ENCODE measurements at regions of chr9 and their contacts with region 1.

Region 1: DNA sequence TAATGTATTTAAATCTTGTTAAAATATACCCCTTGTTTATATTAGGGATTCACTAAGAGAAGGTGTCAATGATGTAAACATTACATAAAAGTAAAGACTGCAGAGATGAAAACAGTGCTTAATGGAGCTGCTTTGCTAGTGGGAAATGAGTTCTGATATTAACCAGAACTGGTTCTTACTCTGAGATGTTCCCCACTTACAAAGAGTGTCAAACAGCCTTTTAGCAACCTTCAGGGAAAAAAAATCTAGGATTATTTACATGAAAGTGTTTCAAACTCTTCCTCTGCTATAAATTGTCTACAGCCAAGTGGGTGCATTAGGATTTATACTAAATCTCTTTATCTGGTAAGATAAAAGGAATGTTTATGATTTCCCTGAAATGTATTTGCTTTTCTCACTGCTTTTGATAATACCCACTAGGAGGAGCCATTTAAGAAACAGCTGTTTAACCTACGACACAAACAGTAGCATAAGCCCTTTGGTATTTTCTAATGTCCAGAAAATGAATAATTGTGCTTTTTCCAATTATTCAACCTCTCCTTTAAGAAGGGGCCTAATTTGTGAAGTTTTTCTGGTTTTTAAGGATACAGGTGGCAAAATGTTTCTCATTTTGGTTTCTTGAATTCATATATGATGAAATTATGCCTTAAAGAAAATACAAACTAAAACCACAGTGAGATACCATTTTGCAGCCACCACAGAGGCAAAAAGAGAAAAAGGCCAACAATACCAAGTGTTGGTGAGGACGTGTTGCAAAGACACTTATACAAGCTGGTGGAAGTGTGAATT is 186.3 kb downstream of the TLE4 start:
- DNase-seq: no peak
- H3K4me3 ChIP-seq: no peak overlapping the region
- CTCF ChIP-seq: peak; percentile 7

Region 2: DNA sequence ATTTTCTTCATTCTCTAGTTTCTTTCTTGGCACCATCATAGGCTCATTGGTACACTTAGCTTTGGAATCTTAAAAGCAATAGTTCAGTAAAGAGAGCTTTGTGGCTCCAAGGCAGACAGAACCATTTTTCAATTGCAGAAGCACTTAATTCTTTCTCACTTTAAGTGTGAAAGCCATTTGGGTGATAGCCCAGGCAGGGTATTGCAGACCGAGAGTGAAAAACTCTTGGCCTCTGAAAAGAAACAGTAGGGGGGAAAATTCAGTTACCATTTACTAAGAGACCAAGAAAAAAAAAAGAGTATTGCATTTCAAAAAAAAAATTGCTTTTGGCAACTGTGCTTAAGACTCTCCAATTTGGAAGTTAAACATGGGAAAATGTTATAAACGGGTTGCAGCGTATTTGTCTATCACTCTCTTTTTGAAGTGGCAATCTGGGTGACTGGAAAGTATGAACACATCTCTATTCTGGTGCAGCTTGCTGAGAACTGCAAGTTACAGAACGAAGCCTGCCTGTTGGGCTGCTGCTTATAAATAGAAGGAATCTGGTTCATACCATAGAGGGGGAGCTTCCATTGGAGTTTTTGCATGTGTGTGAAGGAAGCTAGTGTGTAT is 15.9 kb before region 1 on chr9:
- CTCF ChIA-PET with region 1: interaction called, 10 read pairs
- POLR2A ChIA-PET with region 1: no interaction called
- DNase-seq: no peak
- H3K4me3 ChIP-seq: no peak overlapping the region
- CTCF ChIP-seq: no peak

Region 3: DNA sequence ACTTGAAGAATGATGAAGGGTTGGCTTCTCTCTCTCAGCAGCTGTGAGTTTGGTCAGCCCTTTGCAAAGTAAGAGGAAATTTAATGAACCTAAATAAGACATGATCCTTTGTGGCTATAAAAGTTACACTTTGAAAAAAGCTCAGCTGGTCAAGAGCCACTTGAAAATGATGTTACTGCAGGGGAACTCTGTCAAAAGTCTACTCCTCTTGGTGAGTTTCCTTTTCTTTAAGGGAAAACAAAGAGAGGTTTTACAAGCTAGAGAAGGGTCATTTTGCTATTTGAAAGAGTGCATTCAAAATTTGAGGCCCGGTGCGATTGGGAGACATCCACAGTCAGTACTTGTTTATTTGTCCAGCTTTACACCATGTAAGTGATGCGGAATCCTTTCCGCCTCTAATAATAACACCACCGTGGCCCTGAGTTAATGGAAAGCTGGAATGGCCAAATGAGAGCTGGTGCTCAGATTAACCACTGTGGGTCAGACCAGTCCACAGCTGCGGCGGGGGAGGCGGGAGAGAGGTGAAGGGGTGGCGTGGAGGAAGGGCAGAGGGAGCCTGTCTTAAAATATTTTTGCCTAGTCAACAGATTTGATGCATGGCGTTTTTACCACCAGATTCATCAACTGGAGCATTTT is 217.7 kb after region 1 on chr9:
- CTCF ChIA-PET with region 1: no interaction called
- POLR2A ChIA-PET with region 1: no interaction called
- DNase-seq: no peak
- H3K4me3 ChIP-seq: no peak overlapping the region
- CTCF ChIP-seq: no peak